Posterior vena cava (tissue), 2 donors: ENCODE measurements at regions of chr1 and their contacts with region 1.

Region 1: GRCh38 chr1:203069030-203069747 is 16.6 kb downstream of the MYOG start:
- DNase-seq: no peak

Region 2: GRCh38 chr1:203133970-203134725 is 65.0 kb after region 1 on chr1:
- intact Hi-C with region 1: loop called in 1 of 2 experiments (anchors 2 kb)
- DNase-seq: no peak